ENCODE measurements at regions of chr2 and their contacts with region 1.

Region 1: DNA sequence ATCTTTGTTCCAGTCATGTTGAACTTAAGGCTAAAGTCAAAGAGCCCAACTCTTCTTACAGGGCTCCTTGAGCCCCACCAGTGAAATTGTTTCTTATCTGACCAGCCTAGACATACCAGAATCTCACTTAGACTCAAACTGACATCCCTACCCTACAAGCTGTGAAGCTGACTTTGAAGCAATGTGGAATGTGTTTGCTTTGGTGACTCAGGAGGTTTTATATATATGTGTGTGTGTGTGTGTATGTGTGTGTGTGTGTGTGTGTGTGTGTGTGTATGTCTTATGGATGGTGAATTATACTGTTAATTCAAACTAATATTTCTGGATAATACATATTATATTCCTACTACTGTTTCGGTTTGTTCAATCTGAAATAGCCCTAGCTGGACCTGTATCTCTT is 67.3 kb downstream of the CAMKMT start:
- DNase-seq: no peak
- H3K4me3 ChIP-seq: no peak overlapping the region
- H3K27me3 ChIP-seq: no peaks in the 10 kb centered on the region
- CTCF ChIP-seq: no peak

Region 2: DNA sequence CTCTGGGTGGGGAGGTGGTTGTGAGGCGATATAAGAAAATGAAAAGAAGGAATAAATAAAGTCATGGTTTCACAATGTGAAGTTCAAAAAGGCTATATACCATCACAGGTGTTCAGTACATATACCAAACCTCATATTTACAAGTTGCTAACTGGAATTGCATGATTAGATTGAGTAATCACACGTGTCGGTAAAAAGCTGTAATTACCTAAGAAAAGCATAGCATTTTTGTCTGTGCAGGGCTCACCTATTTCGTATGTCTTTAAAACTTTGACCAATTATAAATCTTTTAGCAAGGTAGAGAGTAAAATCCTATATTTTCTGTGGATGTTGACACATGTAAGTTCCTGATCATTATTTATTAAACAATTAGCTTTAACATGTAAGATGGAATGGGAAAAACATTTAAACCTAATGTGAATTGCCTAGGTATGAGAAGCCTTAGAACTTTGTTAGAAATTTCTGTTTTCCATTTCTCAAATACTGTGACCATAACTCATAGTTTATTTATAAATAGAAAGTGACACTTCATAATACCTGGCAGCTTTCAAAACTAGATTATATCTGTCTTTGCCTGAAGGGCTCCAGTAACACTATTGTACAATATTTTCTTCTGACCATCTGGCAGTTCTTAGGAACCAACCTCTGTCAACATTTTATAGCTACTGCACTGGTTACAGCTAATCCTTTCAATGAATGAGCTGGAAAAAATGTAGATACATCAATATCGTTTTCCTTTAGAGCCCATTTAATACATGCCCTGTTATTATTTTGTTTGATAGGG is 169.9 kb after region 1 on chr2:
- CTCF ChIA-PET with region 1: no interaction called
- POLR2A ChIA-PET with region 1: interaction called, 15 read pairs
- DNase-seq: no peak
- H3K4me3 ChIP-seq: no peak overlapping the region
- H3K27me3 ChIP-seq: no peaks in the 10 kb centered on the region
- CTCF ChIP-seq: no peak

Region 3: GRCh38 chr2:45000921-45001868 is 572.2 kb after region 1 on chr2:
- CTCF ChIA-PET with region 1: no interaction called
- POLR2A ChIA-PET with region 1: no interaction called
- DNase-seq: no peak
- H3K4me3 ChIP-seq: no peak overlapping the region
- H3K27me3 ChIP-seq: peaks cover 42% of the 10 kb centered on the region
- CTCF ChIP-seq: no peak

Measured in BJ (cell line).